ENCODE measurements at regions of chr13 and their contacts with region 1.

Region 1: DNA sequence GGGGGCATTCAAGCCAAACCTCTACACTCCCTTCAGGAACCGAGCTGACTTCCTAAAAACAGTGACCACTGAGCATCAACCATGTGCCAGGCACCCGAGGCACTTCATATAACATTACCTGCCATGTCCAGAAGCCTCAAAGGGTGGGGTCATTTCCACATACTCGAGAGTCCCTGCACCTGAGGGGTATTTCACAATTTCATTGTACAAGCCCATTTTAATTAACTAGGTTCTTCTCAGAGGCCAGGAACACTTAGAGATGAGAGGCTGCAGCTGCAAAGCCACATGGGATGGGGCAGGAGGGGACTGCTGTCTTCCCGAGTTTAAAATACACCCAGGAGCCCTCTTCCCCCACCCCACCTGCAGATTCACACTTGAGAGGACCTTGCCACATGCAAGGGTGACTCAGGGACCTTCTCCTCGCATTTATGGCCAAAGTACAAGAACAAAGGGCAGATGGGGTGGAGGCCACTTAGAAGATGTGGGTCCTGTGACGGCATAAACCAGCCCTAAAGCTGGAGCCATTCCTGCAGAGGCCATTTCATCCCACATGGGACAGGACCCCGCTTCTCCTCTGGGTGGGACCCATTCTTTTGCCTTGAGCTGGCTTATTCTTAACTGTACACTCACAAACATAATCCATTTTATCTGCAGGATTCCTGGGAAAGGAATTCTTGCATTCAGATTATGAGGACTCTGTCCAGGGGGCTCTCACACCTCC is 43.9 kb downstream of the RAB20 start:
- DNase-seq: no peak
- H3K4me3 ChIP-seq: no peak overlapping the region
- H3K27ac ChIP-seq: no peak overlapping the region
- H3K4me1 ChIP-seq: no peaks in the 10 kb centered on the region
- H3K27me3 ChIP-seq: no peaks in the 10 kb centered on the region
- CTCF ChIP-seq: no peak
- POLR2A ChIP-seq: no peak

Region 2: DNA sequence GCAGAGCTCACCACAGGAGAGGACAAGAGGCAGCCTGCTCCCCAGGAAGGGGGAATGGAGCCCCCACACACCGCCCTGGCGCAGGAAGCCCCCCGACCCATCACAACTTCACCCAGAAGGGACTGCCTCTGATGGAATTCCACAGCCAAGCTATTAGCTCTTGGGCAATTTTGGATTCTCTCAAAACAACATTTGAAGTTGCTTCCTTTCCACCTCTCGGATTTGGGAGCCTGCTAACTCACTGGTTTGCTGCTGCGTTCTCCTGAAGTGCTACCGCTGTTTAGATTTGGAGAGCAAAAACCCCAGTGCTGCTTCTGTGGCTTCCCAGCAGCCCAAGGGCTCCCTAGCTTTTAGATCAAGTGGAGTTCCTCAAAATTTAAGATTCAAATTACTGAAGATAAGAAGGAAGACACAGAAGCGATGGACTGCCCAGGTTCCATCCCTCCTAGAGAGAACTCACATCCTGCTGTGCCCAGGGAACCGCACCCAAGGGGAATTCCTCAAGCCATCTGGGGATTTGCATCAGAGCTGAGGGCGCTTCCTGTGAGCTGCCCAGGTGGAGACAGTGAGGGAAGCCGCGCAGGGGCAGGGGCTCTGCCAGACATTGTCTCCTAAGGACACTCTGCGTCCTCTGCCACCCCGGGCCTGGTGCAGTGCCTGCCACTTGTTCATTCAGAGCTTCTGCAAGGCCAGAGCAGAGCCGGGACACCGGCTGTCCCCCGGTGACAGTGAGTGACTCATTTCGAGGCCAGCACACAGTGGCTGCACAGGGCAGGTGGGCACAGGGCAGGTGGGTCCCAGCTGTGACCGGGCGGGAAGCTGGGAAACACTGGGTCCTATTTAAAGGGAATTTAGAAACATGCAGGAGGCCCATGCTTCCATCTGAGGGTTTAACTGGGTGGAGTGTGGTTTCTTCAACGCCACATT is 256.2 kb before region 1 on chr13:
- CTCF ChIA-PET with region 1: no interaction called
- POLR2A ChIA-PET with region 1: no interaction called
- dilution Hi-C with region 1: no loop called
- intact Hi-C with region 1: no loop called
- DNase-seq: peak; percentile 21
- H3K4me3 ChIP-seq: no peak overlapping the region
- H3K27ac ChIP-seq: peak overlapping the region; percentile 81
- H3K4me1 ChIP-seq: peaks cover 80% of the 10 kb centered on the region
- H3K27me3 ChIP-seq: no peaks in the 10 kb centered on the region
- CTCF ChIP-seq: no peak
- POLR2A ChIP-seq: no peak

Region 3: DNA sequence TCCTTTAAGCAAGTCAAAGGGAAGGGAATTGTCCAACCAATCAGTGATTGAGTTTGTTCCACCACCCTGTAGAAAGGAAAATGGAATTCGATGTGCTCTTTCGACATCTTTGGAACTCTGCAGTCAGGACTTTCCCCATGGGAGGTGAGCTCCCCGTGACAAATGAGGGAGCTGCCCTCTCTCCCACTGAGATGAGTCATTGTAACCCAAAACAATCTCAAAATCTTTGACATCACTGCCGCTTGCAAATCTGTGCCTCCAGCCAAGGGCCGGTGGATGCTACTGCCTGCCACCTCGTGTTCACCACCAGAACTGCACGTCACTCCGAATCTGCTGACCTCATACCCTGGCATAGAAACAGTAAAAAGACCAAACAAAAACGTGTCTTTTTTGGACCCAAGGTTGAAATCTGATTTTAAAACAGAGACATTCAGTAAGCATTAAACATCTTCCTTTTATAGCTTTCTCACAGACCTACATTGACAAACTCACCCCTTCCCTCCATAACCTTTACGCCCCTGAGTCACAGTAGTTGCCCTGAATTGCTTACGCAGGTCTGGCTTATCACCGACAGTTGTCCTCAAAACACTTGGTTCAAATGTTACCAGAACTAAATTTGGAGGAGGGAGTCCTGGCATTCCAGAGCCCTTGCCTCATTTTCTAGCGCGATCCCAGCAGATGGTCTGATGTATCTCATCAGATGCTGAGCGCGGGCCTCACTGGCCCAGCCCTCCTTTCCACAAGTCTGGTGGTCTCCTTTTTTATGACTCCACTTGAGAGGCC is 105.3 kb before region 1 on chr13:
- CTCF ChIA-PET with region 1: no interaction called
- POLR2A ChIA-PET with region 1: no interaction called
- dilution Hi-C with region 1: no loop called
- intact Hi-C with region 1: no loop called
- DNase-seq: peak; percentile 93
- H3K4me3 ChIP-seq: no peak overlapping the region
- H3K27ac ChIP-seq: peak overlapping the region; percentile 97
- H3K4me1 ChIP-seq: peaks cover 53% of the 10 kb centered on the region
- H3K27me3 ChIP-seq: no peaks in the 10 kb centered on the region
- CTCF ChIP-seq: peak; percentile 88
- POLR2A ChIP-seq: no peak

Region 4: GRCh38 chr13:110475550-110476219 is 42.0 kb before region 1 on chr13:
- CTCF ChIA-PET with region 1: no interaction called
- POLR2A ChIA-PET with region 1: no interaction called
- dilution Hi-C with region 1: no loop called
- intact Hi-C with region 1: loop called (anchors 1 kb)
- DNase-seq: no peak
- H3K4me3 ChIP-seq: no peak overlapping the region
- H3K27ac ChIP-seq: no peak overlapping the region
- H3K4me1 ChIP-seq: peaks cover 19% of the 10 kb centered on the region
- H3K27me3 ChIP-seq: no peaks in the 10 kb centered on the region
- CTCF ChIP-seq: no peak
- POLR2A ChIP-seq: no peak

Measured in endothelial cell of umbilical vein (primary cell).